Caco-2 (cell line): ENCODE measurements at regions of chr17 and their contacts with region 1.

Region 1: GRCh38 chr17:73156166-73156840 is 8.5 kb upstream of the SSTR2 start:
- DNase-seq: peak; percentile 71 to 77
- H3K4me3 ChIP-seq: no peak overlapping the region
- H3K4me3 Mint-ChIP-seq: no peak overlapping the region
- H3K27ac Mint-ChIP-seq: no peak overlapping the region
- H3K4me1 ChIP-seq: peaks cover 19% of the 10 kb centered on the region
- H3K4me1 Mint-ChIP-seq: peaks cover 19% of the 10 kb centered on the region
- H3K27me3 ChIP-seq: no peaks in the 10 kb centered on the region
- H3K27me3 Mint-ChIP-seq: no peaks in the 10 kb centered on the region
- CTCF ChIP-seq: peak; percentile 87

Region 2: DNA sequence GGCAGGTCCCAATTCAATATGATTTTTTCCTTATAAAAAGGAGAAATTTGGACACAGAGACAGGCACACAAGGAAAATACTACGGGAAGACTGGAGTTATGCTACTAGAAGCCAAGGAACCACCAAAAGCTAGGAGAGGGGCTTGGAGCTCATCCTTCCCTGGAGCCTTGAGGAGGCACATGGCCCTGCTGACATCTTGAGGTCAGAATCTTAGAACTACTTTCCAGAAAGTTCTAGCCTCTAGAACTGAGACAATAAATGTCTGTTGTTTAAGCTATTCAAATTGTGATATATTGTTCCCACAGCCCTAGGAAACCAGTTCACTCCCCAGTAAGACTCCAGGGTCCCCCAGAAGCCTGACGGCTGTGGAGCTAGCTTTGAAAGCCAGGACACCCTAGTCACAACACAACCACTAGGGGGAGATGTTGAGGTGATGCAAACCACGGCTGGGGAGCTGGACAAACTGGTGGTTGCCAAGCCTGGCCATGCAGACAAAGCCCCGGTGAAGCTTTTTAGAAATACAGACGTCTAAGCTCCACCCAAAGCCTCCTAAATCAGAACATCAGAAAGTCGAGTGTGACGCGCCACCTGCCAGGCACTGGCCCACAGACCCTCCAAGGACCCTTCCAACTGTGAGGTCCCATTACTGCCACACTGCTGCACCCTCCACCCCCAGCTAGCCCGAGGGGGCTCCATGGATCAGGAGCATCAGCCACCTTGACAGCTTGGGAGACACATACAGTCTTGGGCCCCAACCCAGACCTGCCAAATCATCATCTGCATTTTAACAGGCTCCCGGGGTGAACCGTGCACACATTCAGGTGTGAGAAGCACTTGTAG is 170.2 kb before region 1 on chr17:
- CTCF ChIA-PET with region 1: interaction called, 38 read pairs
- POLR2A ChIA-PET with region 1: no interaction called
- intact Hi-C with region 1: loop called (anchors 1 kb)
- DNase-seq: peak; percentile 74 to 86
- H3K4me3 ChIP-seq: no peak overlapping the region
- H3K4me3 Mint-ChIP-seq: no peak overlapping the region
- H3K27ac Mint-ChIP-seq: no peak overlapping the region
- H3K4me1 ChIP-seq: no peaks in the 10 kb centered on the region
- H3K4me1 Mint-ChIP-seq: no peaks in the 10 kb centered on the region
- H3K27me3 ChIP-seq: no peaks in the 10 kb centered on the region
- H3K27me3 Mint-ChIP-seq: no peaks in the 10 kb centered on the region
- CTCF ChIP-seq: peak; percentile 89 to 93

Region 3: GRCh38 chr17:73030501-73030921 is 125.8 kb before region 1 on chr17:
- CTCF ChIA-PET with region 1: no interaction called
- POLR2A ChIA-PET with region 1: no interaction called
- intact Hi-C with region 1: no loop called
- DNase-seq: no peak
- H3K4me3 ChIP-seq: no peak overlapping the region
- H3K4me3 Mint-ChIP-seq: no peak overlapping the region
- H3K27ac Mint-ChIP-seq: no peak overlapping the region
- H3K4me1 ChIP-seq: no peaks in the 10 kb centered on the region
- H3K4me1 Mint-ChIP-seq: no peaks in the 10 kb centered on the region
- H3K27me3 ChIP-seq: no peaks in the 10 kb centered on the region
- H3K27me3 Mint-ChIP-seq: no peaks in the 10 kb centered on the region
- CTCF ChIP-seq: no peak

Region 4: GRCh38 chr17:73187203-73187769 is 31.0 kb after region 1 on chr17:
- CTCF ChIA-PET with region 1: interaction called, 3 read pairs
- POLR2A ChIA-PET with region 1: no interaction called
- intact Hi-C with region 1: loop called (anchors 2 kb)
- DNase-seq: peak; percentile 80 to 85
- H3K4me3 ChIP-seq: no peak overlapping the region
- H3K4me3 Mint-ChIP-seq: no peak overlapping the region
- H3K27ac Mint-ChIP-seq: peak overlapping the region; percentile 2
- H3K4me1 ChIP-seq: peaks cover 21% of the 10 kb centered on the region
- H3K4me1 Mint-ChIP-seq: peaks cover 26% of the 10 kb centered on the region
- H3K27me3 ChIP-seq: no peaks in the 10 kb centered on the region
- H3K27me3 Mint-ChIP-seq: no peaks in the 10 kb centered on the region
- CTCF ChIP-seq: no peak

Region 5: DNA sequence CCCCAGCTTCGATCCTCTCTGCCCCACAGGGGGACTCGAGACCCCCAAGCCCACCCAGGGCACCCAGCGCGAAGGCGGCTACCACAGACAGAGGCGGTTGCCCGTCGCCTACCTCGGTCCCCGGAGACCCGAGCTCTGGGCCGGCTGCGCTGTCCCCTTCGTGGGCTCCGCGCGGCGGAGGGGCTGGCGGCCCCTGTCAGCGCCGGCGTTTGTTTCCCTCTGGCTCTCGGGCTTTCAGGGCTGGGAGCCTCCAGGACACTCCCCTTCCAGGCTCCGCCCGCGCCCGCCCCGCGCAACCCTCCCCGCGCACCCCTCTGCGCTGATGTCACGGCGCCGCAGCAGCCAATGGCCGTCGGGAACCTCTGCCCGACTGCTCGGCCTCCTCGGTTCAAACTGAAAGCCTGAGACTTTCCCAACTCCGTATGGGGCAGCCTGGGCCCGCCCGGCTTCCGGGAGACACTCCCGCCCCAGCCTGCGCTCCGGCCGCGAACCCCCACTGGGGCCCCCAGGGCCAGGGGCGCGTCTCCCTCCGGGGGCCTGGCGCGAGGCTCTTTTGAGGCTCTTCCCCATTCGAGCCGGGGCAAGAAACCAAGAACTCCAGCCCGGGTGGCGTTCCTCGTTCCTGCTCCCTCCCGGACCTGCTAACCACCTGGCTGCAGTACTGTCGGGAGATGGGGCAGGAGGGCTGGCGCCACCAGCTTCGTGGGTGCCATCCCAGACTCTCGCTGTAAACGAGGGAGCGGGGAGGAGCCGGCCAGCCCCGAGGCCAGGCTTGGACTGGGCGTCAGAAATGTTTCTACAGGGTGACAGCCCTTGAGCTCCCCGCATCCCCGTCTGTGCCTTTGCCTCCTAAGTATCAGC is 155.7 kb after region 1 on chr17 and contains the start of gene CDC42EP4:
- CTCF ChIA-PET with region 1: no interaction called
- POLR2A ChIA-PET with region 1: no interaction called
- intact Hi-C with region 1: no loop called
- DNase-seq: peak; percentile 96 to 97
- H3K4me3 ChIP-seq: peak within 1 kb of the TSS; percentile 97
- H3K4me3 Mint-ChIP-seq: peak within 1 kb of the TSS; percentile 88
- H3K27ac Mint-ChIP-seq: peak within 1 kb of the TSS; percentile 90
- H3K4me1 ChIP-seq: peaks cover 29% of the 10 kb centered on the region
- H3K4me1 Mint-ChIP-seq: peaks cover 8% of the 10 kb centered on the region
- H3K27me3 ChIP-seq: no peaks in the 10 kb centered on the region
- H3K27me3 Mint-ChIP-seq: no peaks in the 10 kb centered on the region
- CTCF ChIP-seq: peak in 1 of 2 experiments; percentile 14
- total RNA-seq, gene CDC42EP4: 25.8 and 27.9 TPM in 2 replicates